Endothelial cell of umbilical vein (primary cell): ENCODE measurements at regions of chrX and their contacts with region 1.

Region 1: GRCh38 chrX:107776649-107777535 is 641 bp upstream of the NCBP2L start:
- DNase-seq: peak; percentile 87
- H3K4me3 ChIP-seq: peak overlapping the region in 2 of 3 experiments; percentile 45 to 53
- H3K27ac ChIP-seq: no peak overlapping the region
- H3K4me1 ChIP-seq: peaks cover 10% of the 10 kb centered on the region
- H3K27me3 ChIP-seq: no peaks in the 10 kb centered on the region
- CTCF ChIP-seq: peak; percentile 45 to 48
- POLR2A ChIP-seq: no peak

Region 2: DNA sequence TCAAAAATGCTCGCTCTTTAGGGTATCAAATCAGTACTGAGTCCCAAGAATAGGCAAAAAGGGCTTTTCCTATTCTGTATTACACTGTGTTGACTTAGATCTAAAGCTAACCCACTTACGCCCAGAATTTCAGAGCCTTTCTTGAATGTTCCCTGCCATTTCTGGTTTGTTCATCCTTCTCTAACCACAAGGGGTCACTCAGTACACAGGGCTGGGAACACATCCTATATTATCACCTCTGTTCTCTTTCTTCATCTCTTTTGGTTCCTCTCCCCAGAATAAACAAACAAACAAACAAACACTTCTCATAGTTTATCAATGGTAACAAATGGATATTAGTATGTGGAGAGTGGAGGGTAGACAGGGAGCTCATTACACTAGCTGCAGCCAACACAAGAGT is 751.3 kb before region 1 on chrX:
- CTCF ChIA-PET with region 1: interaction called, 11 read pairs
- POLR2A ChIA-PET with region 1: no interaction called
- dilution Hi-C with region 1: no loop called
- intact Hi-C with region 1: loop called (anchors 1 kb)
- DNase-seq: peak; percentile 29
- H3K4me3 ChIP-seq: no peak overlapping the region
- H3K27ac ChIP-seq: no peak overlapping the region
- H3K4me1 ChIP-seq: no peaks in the 10 kb centered on the region
- H3K27me3 ChIP-seq: no peaks in the 10 kb centered on the region
- CTCF ChIP-seq: peak; percentile 24 to 39
- POLR2A ChIP-seq: no peak

Region 3: GRCh38 chrX:107662824-107663223 is 114.1 kb before region 1 on chrX:
- CTCF ChIA-PET with region 1: interaction called, 109 read pairs
- POLR2A ChIA-PET with region 1: no interaction called
- dilution Hi-C with region 1: no loop called
- intact Hi-C with region 1: loop called (anchors 1 kb)
- DNase-seq: no peak
- H3K4me3 ChIP-seq: no peak overlapping the region
- H3K27ac ChIP-seq: no peak overlapping the region
- H3K4me1 ChIP-seq: no peaks in the 10 kb centered on the region
- H3K27me3 ChIP-seq: no peaks in the 10 kb centered on the region
- CTCF ChIP-seq: no peak
- POLR2A ChIP-seq: no peak

Region 4: GRCh38 chrX:107731831-107732502 is 44.9 kb before region 1 on chrX:
- CTCF ChIA-PET with region 1: interaction called, 25 read pairs
- POLR2A ChIA-PET with region 1: no interaction called
- dilution Hi-C with region 1: no loop called
- intact Hi-C with region 1: loop called (anchors 5 kb)
- DNase-seq: peak; percentile 90
- H3K4me3 ChIP-seq: no peak overlapping the region
- H3K27ac ChIP-seq: peak overlapping the region; percentile 13
- H3K4me1 ChIP-seq: peaks cover 24% of the 10 kb centered on the region
- H3K27me3 ChIP-seq: no peaks in the 10 kb centered on the region
- CTCF ChIP-seq: no peak
- POLR2A ChIP-seq: peak; percentile 26

Region 5: GRCh38 chrX:107978707-107979307 is 201.9 kb after region 1 on chrX:
- CTCF ChIA-PET with region 1: interaction called, 3 read pairs
- POLR2A ChIA-PET with region 1: no interaction called
- dilution Hi-C with region 1: no loop called
- intact Hi-C with region 1: loop called (anchors 1 kb)
- DNase-seq: peak; percentile 23
- H3K4me3 ChIP-seq: no peak overlapping the region
- H3K27ac ChIP-seq: no peak overlapping the region
- H3K4me1 ChIP-seq: no peaks in the 10 kb centered on the region
- H3K27me3 ChIP-seq: no peaks in the 10 kb centered on the region
- CTCF ChIP-seq: peak; percentile 26 to 40
- POLR2A ChIP-seq: no peak